ENCODE measurements at regions of chr12 and their contacts with region 1.

Region 1: DNA sequence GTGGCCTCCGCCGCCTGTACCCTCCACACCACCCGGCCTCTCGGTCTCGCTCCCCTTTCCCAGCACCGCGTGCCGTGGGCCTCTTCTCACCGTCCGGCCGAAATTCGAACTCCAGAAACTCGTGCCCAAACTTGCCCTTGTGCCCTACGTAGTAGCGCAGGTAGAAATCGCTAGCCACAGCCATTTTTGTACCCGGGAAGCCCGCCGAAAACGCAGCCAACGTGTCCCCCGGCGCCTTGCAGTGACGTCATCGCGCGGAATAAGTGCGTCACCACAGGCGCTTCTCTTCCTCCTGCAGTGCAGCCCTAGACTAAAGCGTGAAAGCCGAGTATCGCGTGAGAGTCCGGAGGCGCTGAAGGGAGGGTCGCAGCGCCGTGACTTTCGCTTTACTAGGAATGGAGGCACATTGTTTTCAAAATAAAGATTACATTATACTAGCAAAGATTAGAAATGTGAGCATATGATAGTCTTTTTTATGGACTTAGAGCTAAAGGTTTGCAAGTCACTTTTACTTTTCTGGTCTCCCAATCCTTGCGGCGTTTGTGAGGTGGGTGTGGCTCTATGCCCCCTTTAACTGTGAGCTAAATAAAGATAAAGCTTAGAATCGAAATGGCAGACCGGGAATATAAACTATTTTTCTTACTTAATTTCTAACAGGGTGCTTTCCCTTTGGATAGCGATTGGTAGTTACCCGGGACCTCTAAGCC is at the start of gene MAGOHB:
- H3K4me3 Mint-ChIP-seq: peak within 1 kb of the TSS; percentile 100
- H3K27ac Mint-ChIP-seq: peak within 1 kb of the TSS; percentile 100
- H3K4me1 Mint-ChIP-seq: peaks cover 14% of the 10 kb centered on the region
- H3K27me3 Mint-ChIP-seq: no peaks in the 10 kb centered on the region

Region 2: GRCh38 chr12:10196210-10196609 is 417.3 kb before region 1 on chr12:
- intact Hi-C with region 1: no loop called
- H3K4me3 Mint-ChIP-seq: no peak overlapping the region
- H3K27ac Mint-ChIP-seq: no peak overlapping the region
- H3K4me1 Mint-ChIP-seq: peaks cover 14% of the 10 kb centered on the region
- H3K27me3 Mint-ChIP-seq: peaks cover 17% of the 10 kb centered on the region

Region 3: DNA sequence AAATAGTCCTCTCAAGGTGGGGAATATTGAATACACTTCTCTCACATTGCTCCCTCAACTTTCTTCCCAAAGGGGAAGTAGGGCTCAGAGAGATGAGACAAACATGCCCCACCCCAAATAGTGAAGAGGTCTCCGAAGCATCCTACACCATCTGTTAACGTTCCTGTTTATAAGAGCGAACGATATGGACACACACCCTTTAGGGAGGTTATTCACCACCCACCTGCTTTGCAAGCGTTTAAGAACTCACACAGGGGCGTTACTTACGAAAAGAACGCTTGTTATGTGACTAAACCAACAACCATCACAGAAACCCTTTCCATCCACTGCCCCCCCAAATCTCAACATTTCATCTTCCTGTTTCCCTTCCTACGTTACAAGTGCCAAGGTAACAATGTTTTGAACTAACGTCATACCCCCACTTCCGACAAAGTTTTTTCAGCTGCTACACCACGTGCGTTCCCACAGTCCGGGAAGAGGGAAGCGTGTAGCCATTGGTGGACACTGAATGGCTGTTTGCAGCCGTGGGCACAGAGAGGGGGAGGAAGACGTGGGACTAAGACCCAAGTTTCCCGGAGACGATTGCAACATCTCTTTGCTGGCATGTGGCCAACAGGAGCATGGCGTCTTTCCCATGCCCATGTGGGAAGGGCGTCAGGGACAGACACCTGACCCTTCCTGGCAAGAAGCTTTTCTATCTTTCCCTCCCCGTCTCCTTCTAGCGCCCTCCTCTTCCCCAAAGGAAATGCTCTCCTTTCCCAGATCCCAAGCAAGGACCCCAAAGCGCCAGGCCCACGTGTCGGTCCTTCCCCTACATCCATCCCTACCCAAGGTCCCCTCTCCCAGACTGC is 108.4 kb after region 1 on chr12:
- intact Hi-C with region 1: loop called (anchors 10 kb)
- H3K4me3 Mint-ChIP-seq: peak overlapping the region; percentile 96
- H3K27ac Mint-ChIP-seq: peak overlapping the region; percentile 96
- H3K4me1 Mint-ChIP-seq: peaks cover 32% of the 10 kb centered on the region
- H3K27me3 Mint-ChIP-seq: peaks cover 12% of the 10 kb centered on the region